ENCODE measurements at regions of chr2 and their contacts with region 1.

Region 1: GRCh38 chr2:213015387-213016165 is 135.8 kb downstream of the IKZF2 start:
- DNase-seq: peak; percentile 37
- H3K4me3 Mint-ChIP-seq: no peak overlapping the region
- H3K27ac Mint-ChIP-seq: peak overlapping the region; percentile 45
- H3K4me1 Mint-ChIP-seq: peaks cover 37% of the 10 kb centered on the region
- H3K27me3 Mint-ChIP-seq: peaks cover 20% of the 10 kb centered on the region

Region 2: GRCh38 chr2:212777020-212777491 is 238.5 kb before region 1 on chr2:
- intact Hi-C with region 1: loop called (anchors 5 kb)
- DNase-seq: no peak
- H3K4me3 Mint-ChIP-seq: no peak overlapping the region
- H3K27ac Mint-ChIP-seq: no peak overlapping the region
- H3K4me1 Mint-ChIP-seq: no peaks in the 10 kb centered on the region
- H3K27me3 Mint-ChIP-seq: no peaks in the 10 kb centered on the region

Region 3: DNA sequence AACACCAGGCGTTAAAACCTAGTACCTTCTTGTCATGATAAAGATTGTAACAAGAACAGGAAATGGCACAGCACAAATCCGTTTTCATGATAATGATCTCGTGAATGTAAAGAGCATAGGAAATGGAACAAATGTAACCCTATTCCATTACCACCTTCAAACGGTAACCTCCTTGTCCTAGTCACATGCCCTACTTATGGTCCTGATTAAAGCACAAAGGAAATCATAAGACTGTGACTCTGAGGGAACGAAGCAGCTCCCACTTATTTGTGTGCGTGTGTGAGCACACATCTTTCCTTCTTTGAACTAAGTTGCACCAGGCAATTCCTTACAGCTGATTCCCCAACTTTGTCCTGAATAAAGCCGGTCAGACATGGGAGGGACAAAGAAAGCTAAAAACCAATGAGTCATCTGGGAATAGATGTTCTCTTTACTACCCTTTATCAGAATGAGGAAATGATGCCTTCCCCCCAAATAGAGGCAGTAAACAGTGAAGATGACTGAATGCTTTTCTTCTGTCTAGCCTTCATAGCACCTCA is 56.8 kb before region 1 on chr2:
- intact Hi-C with region 1: loop called (anchors 5 kb)
- DNase-seq: no peak
- H3K4me3 Mint-ChIP-seq: no peak overlapping the region
- H3K27ac Mint-ChIP-seq: no peak overlapping the region
- H3K4me1 Mint-ChIP-seq: peaks cover 23% of the 10 kb centered on the region
- H3K27me3 Mint-ChIP-seq: peaks cover 3% of the 10 kb centered on the region

Region 4: DNA sequence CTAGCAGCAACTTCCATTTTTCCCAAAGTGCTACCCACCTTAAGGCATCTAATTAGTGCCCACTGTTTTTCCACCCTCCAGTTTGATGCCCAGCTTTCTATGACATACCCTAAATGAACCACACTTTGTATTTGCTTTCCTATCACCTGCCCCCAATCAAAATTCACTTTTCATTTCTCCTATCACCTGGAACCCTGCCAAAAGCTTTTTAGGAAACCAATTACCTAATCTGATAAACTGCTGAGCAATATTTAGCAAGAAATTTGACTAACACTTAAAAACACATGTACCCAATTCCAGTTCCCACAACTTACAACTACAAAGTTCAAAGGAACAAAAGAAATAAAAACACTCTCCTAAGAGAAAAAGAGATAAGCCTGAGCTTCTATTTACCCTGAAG is 64.2 kb after region 1 on chr2:
- intact Hi-C with region 1: no loop called
- DNase-seq: no peak
- H3K4me3 Mint-ChIP-seq: no peak overlapping the region
- H3K27ac Mint-ChIP-seq: no peak overlapping the region
- H3K4me1 Mint-ChIP-seq: no peaks in the 10 kb centered on the region
- H3K27me3 Mint-ChIP-seq: peaks cover 3% of the 10 kb centered on the region

Region 5: GRCh38 chr2:213119061-213119856 is 103.7 kb after region 1 on chr2:
- intact Hi-C with region 1: loop called (anchors 1 kb)
- DNase-seq: no peak
- H3K4me3 Mint-ChIP-seq: no peak overlapping the region
- H3K27ac Mint-ChIP-seq: peak overlapping the region; percentile 56
- H3K4me1 Mint-ChIP-seq: peaks cover 14% of the 10 kb centered on the region
- H3K27me3 Mint-ChIP-seq: peaks cover 1% of the 10 kb centered on the region

Region 6: GRCh38 chr2:213189001-213189899 is 173.7 kb after region 1 on chr2:
- intact Hi-C with region 1: no loop called
- DNase-seq: no peak
- H3K4me3 Mint-ChIP-seq: no peak overlapping the region
- H3K27ac Mint-ChIP-seq: no peak overlapping the region
- H3K4me1 Mint-ChIP-seq: no peaks in the 10 kb centered on the region
- H3K27me3 Mint-ChIP-seq: no peaks in the 10 kb centered on the region

Region 7: GRCh38 chr2:213284105-213285090 is 268.8 kb after region 1 on chr2 and contains the start of gene SPAG16:
- intact Hi-C with region 1: loop called (anchors 5 kb)
- DNase-seq: peak; percentile 98
- H3K4me3 Mint-ChIP-seq: peak within 1 kb of the TSS; percentile 90
- H3K27ac Mint-ChIP-seq: peak within 1 kb of the TSS; percentile 84
- H3K4me1 Mint-ChIP-seq: peaks cover 25% of the 10 kb centered on the region
- H3K27me3 Mint-ChIP-seq: peaks cover 2% of the 10 kb centered on the region
- total RNA-seq, gene SPAG16: 7.3 TPM in 2 replicates